ENCODE measurements at regions of chr1 and their contacts with region 1.

Region 1: DNA sequence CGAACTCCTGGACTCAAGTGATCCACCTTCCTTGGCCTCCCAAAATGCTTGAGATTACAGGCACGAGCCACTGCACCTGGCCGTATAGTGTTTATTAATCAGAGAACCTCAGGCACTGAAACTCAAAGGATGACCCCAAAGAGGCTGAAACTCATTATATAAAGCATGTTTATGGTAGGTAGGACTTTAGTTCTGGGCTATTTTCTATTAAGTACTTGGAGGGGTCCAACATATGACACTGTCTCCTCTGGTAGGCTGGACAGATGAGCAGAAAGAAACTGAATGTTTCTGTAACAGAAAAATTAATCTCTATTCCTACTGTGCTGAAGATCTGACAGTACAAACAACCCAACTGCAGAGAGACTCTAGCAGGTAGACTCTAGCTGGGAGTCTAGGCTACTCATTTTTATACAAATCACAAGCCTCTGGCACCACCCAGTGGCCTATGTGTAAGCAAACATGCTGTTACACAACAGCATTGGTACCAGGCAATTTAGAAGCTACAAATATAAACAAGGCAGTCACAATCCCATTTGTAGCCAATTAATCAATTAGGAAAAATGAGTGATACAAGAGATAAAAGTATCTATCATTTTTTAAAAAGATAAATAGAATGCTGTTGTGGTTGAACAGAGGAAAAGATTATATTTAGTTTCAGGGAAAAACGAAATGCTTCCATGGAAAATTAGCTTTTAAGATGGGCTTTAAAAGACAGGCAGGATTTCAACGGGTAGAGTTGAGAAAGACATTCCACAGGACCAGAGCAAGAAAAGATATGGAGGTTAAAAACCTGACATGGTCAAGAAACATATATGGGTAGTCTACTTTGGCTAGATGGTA is 10.4 kb downstream of the DCAF8 start:
- DNase-seq: peak; percentile 73
- ATAC-seq: peak; percentile 95
- H3K4me3 ChIP-seq: no peak overlapping the region
- H3K4me3 Mint-ChIP-seq: no peak overlapping the region
- H3K27ac ChIP-seq: peak overlapping the region in 1 of 2 donors; percentile 3
- H3K27ac Mint-ChIP-seq: no peak overlapping the region
- H3K4me1 ChIP-seq: no peaks in the 10 kb centered on the region
- H3K4me1 Mint-ChIP-seq: peaks cover 10% of the 10 kb centered on the region
- H3K27me3 ChIP-seq: no peaks in the 10 kb centered on the region
- H3K27me3 Mint-ChIP-seq: no peaks in the 10 kb centered on the region
- CTCF ChIP-seq: peak; percentile 85

Region 2: DNA sequence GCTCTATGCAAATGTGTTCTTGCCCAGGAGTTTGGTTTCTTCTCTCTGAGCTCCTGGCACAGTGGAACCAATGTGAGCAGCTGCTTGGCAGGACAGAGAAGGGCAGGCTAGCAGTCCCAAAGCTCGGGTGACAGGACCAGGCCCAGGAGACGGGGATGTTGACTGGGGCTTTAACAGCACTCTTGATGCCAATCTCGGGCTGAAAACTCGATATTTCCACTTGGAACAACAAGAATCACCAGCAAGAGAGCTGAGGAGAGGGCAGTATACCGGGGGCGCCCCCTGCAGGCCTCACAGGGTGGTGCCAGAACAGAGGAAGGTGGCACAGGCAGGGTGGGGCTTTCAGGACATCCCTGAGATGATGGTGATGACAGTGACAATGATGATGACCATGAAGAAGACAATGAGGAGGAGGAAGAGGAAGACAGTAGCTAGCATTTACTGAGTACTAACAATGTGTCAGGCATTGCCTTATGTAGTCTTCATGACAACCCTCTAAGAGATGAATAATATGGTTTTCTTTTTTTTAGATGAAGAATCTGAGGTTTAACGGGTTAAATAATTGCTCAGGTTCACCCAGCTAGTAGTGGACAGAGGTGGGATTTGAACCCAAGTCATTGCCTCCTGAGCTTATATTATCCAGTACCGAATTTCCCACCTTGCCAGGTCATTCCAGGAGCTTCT is 173.3 kb before region 1 on chr1:
- CTCF ChIA-PET with region 1: interaction called, 14 read pairs
- POLR2A ChIA-PET with region 1: no interaction called
- intact Hi-C with region 1: no loop called
- DNase-seq: peak; percentile 66
- ATAC-seq: peak; percentile 70
- H3K4me3 ChIP-seq: no peak overlapping the region
- H3K4me3 Mint-ChIP-seq: no peak overlapping the region
- H3K27ac ChIP-seq: no peak overlapping the region
- H3K27ac Mint-ChIP-seq: no peak overlapping the region
- H3K4me1 ChIP-seq: peaks cover 0 to 4% of the 10 kb centered on the region in 2 donors
- H3K4me1 Mint-ChIP-seq: peaks cover 2% of the 10 kb centered on the region
- H3K27me3 ChIP-seq: peaks cover 0 to 51% (median 35%) of the 10 kb centered on the region in 4 experiments
- H3K27me3 Mint-ChIP-seq: peaks cover 54% of the 10 kb centered on the region
- CTCF ChIP-seq: peak; percentile 83

Region 3: GRCh38 chr1:160108888-160109662 is 142.8 kb before region 1 on chr1:
- CTCF ChIA-PET with region 1: interaction called, 84 read pairs
- POLR2A ChIA-PET with region 1: no interaction called
- intact Hi-C with region 1: no loop called
- DNase-seq: peak; percentile 52
- ATAC-seq: no peak
- H3K4me3 ChIP-seq: no peak overlapping the region
- H3K4me3 Mint-ChIP-seq: no peak overlapping the region
- H3K27ac ChIP-seq: no peak overlapping the region
- H3K27ac Mint-ChIP-seq: no peak overlapping the region
- H3K4me1 ChIP-seq: no peaks in the 10 kb centered on the region
- H3K4me1 Mint-ChIP-seq: peaks cover 2% of the 10 kb centered on the region
- H3K27me3 ChIP-seq: peaks cover 0 to 3% (median 0%) of the 10 kb centered on the region in 4 experiments
- H3K27me3 Mint-ChIP-seq: peaks cover 5% of the 10 kb centered on the region
- CTCF ChIP-seq: peak; percentile 60

Region 4: DNA sequence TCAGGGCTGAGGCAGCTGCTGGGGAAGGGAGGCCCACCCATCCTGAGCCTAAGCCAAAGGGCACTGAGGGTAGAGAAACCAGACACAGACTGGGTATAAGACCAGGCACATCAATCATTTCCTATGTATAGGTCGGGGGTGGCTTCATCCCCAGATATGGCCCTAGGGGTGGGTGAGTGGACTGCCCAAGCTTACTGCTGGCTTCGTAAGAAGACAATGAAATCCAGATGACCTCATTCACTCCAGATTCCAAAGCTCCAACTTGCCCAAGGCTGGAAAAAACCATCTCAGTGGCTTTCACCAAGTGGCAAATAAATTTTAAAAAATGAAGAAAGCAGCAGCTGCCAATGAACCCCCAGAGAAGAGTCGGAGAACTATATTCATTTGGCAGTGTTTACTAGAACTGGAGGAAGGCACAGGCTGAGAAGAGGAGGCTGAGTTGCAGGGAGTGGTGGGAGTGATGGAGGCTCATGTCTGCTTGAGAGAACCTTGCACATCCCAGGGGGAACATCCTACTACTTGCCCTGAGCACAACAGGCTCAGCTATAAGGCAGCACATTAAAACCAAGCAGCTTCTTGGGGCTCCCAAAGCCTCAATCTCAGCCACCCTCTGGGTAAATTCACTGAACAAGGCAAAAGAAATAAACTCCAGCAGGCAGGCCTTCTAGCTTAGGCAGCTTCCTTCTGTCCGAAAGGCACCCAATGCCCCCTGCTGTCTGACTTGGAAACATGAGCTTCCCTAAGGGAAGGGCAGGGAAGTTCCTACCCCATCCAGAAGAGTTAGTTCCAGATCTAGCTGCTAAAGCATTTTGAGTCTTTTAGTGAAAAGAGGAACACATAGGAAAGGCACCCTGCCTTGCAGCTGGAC is 32.6 kb before region 1 on chr1:
- CTCF ChIA-PET with region 1: interaction called, 29 read pairs
- POLR2A ChIA-PET with region 1: interaction called, 7 read pairs
- intact Hi-C with region 1: no loop called
- DNase-seq: peak; percentile 34
- ATAC-seq: no peak
- H3K4me3 ChIP-seq: no peak overlapping the region
- H3K4me3 Mint-ChIP-seq: no peak overlapping the region
- H3K27ac ChIP-seq: peak overlapping the region in 1 of 2 donors; percentile 13
- H3K27ac Mint-ChIP-seq: peak overlapping the region; percentile 57
- H3K4me1 ChIP-seq: no peaks in the 10 kb centered on the region
- H3K4me1 Mint-ChIP-seq: no peaks in the 10 kb centered on the region
- H3K27me3 ChIP-seq: no peaks in the 10 kb centered on the region
- H3K27me3 Mint-ChIP-seq: no peaks in the 10 kb centered on the region
- CTCF ChIP-seq: no peak

Region 5: GRCh38 chr1:160238408-160238807 is 13.5 kb before region 1 on chr1:
- CTCF ChIA-PET with region 1: interaction called, 30 read pairs
- POLR2A ChIA-PET with region 1: no interaction called
- intact Hi-C with region 1: no loop called
- DNase-seq: no peak
- ATAC-seq: no peak
- H3K4me3 ChIP-seq: no peak overlapping the region
- H3K4me3 Mint-ChIP-seq: no peak overlapping the region
- H3K27ac ChIP-seq: no peak overlapping the region
- H3K27ac Mint-ChIP-seq: no peak overlapping the region
- H3K4me1 ChIP-seq: peaks cover 8 to 10% of the 10 kb centered on the region in 2 donors
- H3K4me1 Mint-ChIP-seq: peaks cover 11% of the 10 kb centered on the region
- H3K27me3 ChIP-seq: no peaks in the 10 kb centered on the region
- H3K27me3 Mint-ChIP-seq: no peaks in the 10 kb centered on the region
- CTCF ChIP-seq: no peak

Region 6: DNA sequence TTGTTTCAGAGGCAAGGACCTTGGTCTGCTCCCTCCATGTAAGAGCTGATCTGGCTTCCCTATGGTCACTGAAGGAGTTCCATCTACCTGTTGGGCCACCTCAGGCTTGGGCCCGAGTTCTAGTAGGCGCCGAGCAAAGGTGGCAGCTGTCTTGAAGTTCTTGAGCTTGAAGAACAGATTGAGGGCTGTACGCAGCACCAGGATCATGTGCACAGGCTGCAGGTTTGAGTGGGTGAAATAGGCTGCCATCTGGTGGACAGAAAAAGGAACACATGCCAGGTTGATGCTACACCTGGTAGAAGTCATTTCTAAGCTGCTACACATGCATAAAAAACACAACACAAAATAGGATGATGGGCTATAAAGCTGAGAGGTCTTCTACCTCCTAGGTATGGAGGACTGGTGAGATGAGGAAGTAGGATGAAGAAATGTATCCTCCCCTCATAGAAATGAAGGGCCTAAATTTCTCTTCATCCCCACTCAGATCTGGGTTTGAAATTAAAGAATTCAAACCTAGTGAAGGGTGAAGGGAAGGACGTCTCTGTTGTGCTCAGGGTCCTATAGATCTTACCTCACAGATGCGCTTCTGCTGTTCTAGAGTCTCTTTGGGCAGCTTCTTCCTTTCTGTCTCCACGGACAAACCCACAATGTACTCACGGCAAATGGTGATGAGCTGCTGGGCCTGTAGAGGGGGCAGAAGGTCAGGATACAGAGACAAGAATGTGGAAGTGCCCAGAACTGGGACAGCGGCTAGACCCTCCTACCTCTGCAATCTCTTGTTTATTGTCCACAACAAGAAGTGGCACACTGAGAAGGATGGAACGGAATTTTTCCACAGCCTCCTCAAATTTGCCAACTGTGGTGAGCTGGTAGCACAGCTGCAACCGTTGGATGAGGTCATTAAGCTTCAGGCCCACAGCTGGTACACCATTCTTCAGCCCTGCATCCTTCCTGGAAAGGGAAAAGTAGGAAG is 39.6 kb after region 1 on chr1:
- CTCF ChIA-PET with region 1: interaction called, 57 read pairs
- POLR2A ChIA-PET with region 1: no interaction called
- intact Hi-C with region 1: no loop called
- DNase-seq: peak; percentile 84
- ATAC-seq: peak; percentile 97
- H3K4me3 ChIP-seq: no peak overlapping the region
- H3K4me3 Mint-ChIP-seq: no peak overlapping the region
- H3K27ac ChIP-seq: peak overlapping the region in 1 of 2 donors; percentile 24
- H3K27ac Mint-ChIP-seq: peak overlapping the region; percentile 8
- H3K4me1 ChIP-seq: no peaks in the 10 kb centered on the region
- H3K4me1 Mint-ChIP-seq: peaks cover 3% of the 10 kb centered on the region
- H3K27me3 ChIP-seq: no peaks in the 10 kb centered on the region
- H3K27me3 Mint-ChIP-seq: no peaks in the 10 kb centered on the region
- CTCF ChIP-seq: peak; percentile 87

Region 7: GRCh38 chr1:160307118-160307854 is 55.4 kb after region 1 on chr1:
- CTCF ChIA-PET with region 1: no interaction called
- POLR2A ChIA-PET with region 1: no interaction called
- intact Hi-C with region 1: no loop called
- DNase-seq: peak; percentile 68
- ATAC-seq: peak; percentile 94
- H3K4me3 ChIP-seq: peak overlapping the region in 1 of 5 experiments; percentile 24
- H3K4me3 Mint-ChIP-seq: peak overlapping the region; percentile 41
- H3K27ac ChIP-seq: peak overlapping the region; percentile 39 to 72
- H3K27ac Mint-ChIP-seq: peak overlapping the region; percentile 91
- H3K4me1 ChIP-seq: peaks cover 7 to 22% of the 10 kb centered on the region in 2 donors
- H3K4me1 Mint-ChIP-seq: peaks cover 35% of the 10 kb centered on the region
- H3K27me3 ChIP-seq: no peaks in the 10 kb centered on the region
- H3K27me3 Mint-ChIP-seq: no peaks in the 10 kb centered on the region
- CTCF ChIP-seq: no peak

Region 8: DNA sequence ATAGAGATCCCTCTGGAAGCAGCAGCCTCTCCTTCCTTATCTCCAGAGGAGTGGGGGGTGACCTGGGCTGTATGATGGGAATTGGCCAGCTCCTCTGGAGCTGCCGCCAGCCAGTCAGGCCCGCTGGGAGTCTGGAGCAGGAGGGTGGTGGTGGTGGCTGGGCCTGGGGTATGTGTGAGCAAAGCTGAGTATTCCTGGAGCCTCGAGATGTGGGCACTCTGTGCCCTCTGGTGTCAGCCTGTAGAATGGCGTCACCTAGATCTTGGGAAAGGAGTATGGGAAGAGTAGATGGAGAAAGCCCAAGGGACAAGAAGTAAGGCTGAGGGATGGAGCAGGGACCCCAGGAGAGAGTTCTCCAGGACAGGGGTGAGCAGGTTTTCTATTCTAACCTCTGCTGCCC is 164.5 kb after region 1 on chr1:
- CTCF ChIA-PET with region 1: no interaction called
- POLR2A ChIA-PET with region 1: no interaction called
- intact Hi-C with region 1: no loop called
- DNase-seq: no peak
- ATAC-seq: no peak
- H3K4me3 ChIP-seq: no peak overlapping the region
- H3K4me3 Mint-ChIP-seq: no peak overlapping the region
- H3K27ac ChIP-seq: no peak overlapping the region
- H3K27ac Mint-ChIP-seq: no peak overlapping the region
- H3K4me1 ChIP-seq: no peaks in the 10 kb centered on the region
- H3K4me1 Mint-ChIP-seq: no peaks in the 10 kb centered on the region
- H3K27me3 ChIP-seq: no peaks in the 10 kb centered on the region
- H3K27me3 Mint-ChIP-seq: no peaks in the 10 kb centered on the region
- CTCF ChIP-seq: no peak

Measured in B cell (primary cell).